ENCODE measurements at regions of chr1 and their contacts with region 1.

Region 1: DNA sequence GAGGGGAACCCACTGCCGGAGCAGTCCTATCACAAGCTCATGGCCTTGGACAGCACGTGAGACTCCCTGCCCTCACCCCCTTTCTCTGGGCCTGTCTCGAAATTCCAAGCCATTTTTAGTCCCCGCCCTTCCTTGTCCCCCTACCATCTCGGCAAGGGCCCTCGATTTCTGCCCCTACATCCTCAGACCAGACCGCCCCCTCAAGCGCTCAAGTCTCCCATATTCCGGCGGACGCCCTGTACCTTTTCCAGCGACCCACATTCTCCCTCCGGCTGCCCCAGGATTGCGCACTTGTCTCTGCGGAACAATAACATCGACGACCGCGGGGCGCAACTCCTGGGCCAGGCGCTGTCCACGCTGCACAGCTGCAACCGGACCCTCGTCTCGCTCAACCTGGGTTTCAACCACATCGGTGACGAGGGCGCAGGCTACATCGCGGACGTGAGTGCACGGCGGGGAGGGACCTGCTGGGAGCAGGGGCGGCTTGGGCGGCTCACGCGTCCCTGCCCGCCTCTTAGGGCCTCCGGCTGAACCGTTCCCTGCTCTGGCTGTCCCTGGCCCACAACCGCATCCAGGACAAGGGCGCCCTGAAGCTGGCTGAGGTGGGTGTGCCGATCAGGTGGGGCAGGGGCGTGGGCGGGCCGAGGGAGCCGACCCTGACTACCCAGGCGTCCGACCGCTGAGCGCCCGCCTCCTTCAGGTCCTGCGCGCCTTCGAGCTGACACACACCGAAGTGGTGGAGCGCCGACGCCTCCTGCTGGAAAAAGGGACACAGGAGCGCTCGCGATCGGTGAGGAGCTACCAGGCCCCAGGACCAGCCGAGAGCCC is 7.0 kb downstream of the LRRC71 start:
- DNase-seq: peak; percentile 81
- ATAC-seq: peak; percentile 82
- H3K4me3 Mint-ChIP-seq: peak overlapping the region; percentile 20
- H3K27ac Mint-ChIP-seq: no peak overlapping the region
- H3K4me1 Mint-ChIP-seq: peaks cover 38% of the 10 kb centered on the region
- H3K27me3 Mint-ChIP-seq: peaks cover 77% of the 10 kb centered on the region

Region 2: DNA sequence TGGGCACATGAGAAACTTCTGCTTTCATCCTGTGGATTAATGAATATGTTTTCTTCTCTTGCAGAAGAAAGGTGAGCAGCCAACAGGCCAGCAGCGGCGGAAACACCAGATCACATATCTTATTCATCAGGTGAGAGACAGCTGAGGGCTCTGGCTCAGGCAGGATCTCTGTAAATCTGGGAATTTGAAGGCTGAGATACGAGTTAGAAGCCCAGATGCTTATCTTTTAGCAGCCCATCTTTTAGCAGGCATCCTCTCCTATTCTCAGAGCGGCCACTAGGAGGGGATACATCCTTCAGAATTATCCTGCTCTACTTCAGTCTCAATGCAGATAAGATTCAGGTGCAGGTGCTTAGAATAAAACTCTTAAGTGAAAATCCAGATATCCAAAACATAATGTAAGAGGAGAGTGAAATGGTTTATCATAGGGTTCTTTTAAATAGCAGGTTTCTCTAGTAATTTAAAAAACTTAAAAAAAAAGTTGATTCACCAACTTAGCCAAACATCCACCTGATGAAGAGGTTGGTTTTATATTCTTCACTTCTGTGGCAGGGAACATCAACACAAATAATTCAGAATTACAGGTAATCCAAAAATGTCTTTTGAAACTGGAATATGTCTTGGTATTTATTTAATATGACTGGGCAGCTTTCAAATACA is 130.1 kb before region 1 on chr1:
- CTCF ChIA-PET with region 1: interaction called, 12 read pairs
- POLR2A ChIA-PET with region 1: no interaction called
- DNase-seq: peak; percentile 81
- ATAC-seq: peak; percentile 76
- H3K4me3 Mint-ChIP-seq: no peak overlapping the region
- H3K27ac Mint-ChIP-seq: no peak overlapping the region
- H3K4me1 Mint-ChIP-seq: peaks cover 24% of the 10 kb centered on the region
- H3K27me3 Mint-ChIP-seq: no peaks in the 10 kb centered on the region

Region 3: GRCh38 chr1:156898161-156898566 is 29.3 kb before region 1 on chr1:
- CTCF ChIA-PET with region 1: interaction called, 93 read pairs
- POLR2A ChIA-PET with region 1: interaction called, 3 read pairs
- DNase-seq: peak; percentile 42
- ATAC-seq: peak; percentile 63
- H3K4me3 Mint-ChIP-seq: no peak overlapping the region
- H3K27ac Mint-ChIP-seq: peak overlapping the region; percentile 37
- H3K4me1 Mint-ChIP-seq: peaks cover 22% of the 10 kb centered on the region
- H3K27me3 Mint-ChIP-seq: peaks cover 28% of the 10 kb centered on the region

Region 4: GRCh38 chr1:156961709-156962108 is 34.3 kb after region 1 on chr1:
- CTCF ChIA-PET with region 1: interaction called, 15 read pairs
- POLR2A ChIA-PET with region 1: no interaction called
- DNase-seq: peak; percentile 69
- ATAC-seq: peak; percentile 72
- H3K4me3 Mint-ChIP-seq: no peak overlapping the region
- H3K27ac Mint-ChIP-seq: no peak overlapping the region
- H3K4me1 Mint-ChIP-seq: peaks cover 39% of the 10 kb centered on the region
- H3K27me3 Mint-ChIP-seq: peaks cover 14% of the 10 kb centered on the region

Region 5: GRCh38 chr1:156970017-156970416 is 42.6 kb after region 1 on chr1:
- CTCF ChIA-PET with region 1: interaction called, 15 read pairs
- POLR2A ChIA-PET with region 1: no interaction called
- DNase-seq: no peak
- ATAC-seq: no peak
- H3K4me3 Mint-ChIP-seq: no peak overlapping the region
- H3K27ac Mint-ChIP-seq: no peak overlapping the region
- H3K4me1 Mint-ChIP-seq: no peaks in the 10 kb centered on the region
- H3K27me3 Mint-ChIP-seq: peaks cover 58% of the 10 kb centered on the region

Region 6: GRCh38 chr1:157000686-157001085 is 73.3 kb after region 1 on chr1:
- CTCF ChIA-PET with region 1: no interaction called
- POLR2A ChIA-PET with region 1: no interaction called
- DNase-seq: no peak
- ATAC-seq: no peak
- H3K4me3 Mint-ChIP-seq: no peak overlapping the region
- H3K27ac Mint-ChIP-seq: no peak overlapping the region
- H3K4me1 Mint-ChIP-seq: no peaks in the 10 kb centered on the region
- H3K27me3 Mint-ChIP-seq: peaks cover 30% of the 10 kb centered on the region

Measured in activated CD8-positive, alpha-beta T cell treated with anti-CD3 and anti-CD28 coated beads, Interleukin-2, amount 10 ng/mL, durations not matched to agents 7 days and 5 days (primary cell).